SK-N-SH (cell line): ENCODE measurements at regions of chr11 and their contacts with region 1.

Region 1: DNA sequence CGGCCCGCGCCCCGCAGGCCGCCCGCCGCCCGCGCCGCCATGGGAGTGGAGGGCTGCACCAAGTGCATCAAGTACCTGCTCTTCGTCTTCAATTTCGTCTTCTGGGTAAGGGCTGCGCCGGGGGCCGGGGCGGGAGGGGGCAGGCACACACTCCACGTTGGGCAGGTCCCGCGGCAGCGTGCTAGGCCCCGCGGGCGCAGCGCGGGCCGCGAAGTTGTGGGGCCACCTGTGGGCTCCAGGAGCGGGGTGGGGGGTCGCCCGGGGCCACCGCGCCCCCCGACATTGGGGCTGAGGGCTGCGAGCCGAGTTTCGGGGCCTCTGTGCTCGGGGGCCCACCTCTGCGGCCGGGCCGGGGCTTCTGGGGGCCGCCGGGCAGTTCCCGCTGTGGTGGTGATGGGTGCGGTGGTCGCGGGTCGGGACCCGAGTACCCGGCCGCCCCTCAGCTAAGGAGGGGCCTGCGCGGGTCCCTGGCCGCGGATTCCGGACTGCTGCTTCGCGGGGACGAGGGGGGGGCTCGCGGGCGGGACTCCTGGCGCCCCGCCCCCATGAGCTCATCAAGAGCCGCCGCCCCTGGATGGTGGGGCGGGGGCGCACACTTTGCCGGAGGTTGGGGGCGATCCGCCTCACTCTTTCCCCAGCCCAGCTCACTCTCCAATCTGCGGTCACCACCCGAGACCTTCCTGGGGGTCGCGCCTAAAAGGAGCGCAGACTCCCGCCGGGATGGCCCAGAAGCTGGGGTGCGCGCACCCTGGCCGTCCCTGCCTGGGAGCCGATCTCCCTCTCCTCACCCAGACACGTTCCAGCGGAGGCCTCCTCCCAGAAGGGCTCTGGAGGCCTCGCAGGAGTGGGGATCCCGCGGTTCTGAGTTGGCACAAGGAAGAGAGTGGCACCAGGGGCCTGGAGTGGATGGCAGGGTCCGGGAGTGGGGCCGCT is 667 bp downstream of the CD81 start:
- DNase-seq: peak; percentile 95
- H3K4me3 ChIP-seq: peak overlapping the region; percentile 68 to 80
- H3K27ac ChIP-seq: peak overlapping the region; percentile 68 to 74
- H3K4me1 ChIP-seq: peaks cover 0 to 16% of the 10 kb centered on the region in 2 experiments; a peak in 2 of 4 replicates
- H3K27me3 ChIP-seq: no peaks in the 10 kb centered on the region
- CTCF ChIP-seq: no peak
- EP300 ChIP-seq: no peak
- RAD21 ChIP-seq: no peak

Region 2: DNA sequence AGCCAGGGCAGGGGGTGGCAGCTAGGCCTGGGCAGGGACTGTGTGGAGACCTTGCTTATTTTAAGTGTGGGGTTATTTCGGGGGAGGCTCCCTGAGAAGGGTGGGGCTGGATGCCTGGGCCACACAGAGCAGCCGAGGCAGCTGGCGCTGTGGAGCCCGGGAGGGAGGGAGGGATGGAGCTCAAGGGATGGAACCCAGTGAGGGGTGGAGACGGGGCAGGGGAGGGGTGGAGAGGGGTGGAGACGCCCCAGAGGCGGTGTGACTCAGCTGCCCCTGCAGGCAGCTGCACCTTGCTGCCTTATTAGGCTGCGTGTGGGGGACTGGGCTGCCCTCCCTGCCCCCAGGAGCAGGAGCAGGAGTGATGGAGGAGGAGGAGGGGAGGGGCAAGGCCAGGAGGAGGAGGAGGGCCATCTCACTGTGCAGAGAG is 13.0 kb after region 1 on chr11:
- CTCF ChIA-PET with region 1: interaction called, 8 read pairs
- POLR2A ChIA-PET with region 1: interaction called, 12 read pairs
- DNase-seq: no peak
- H3K4me3 ChIP-seq: no peak overlapping the region
- H3K27ac ChIP-seq: no peak overlapping the region
- H3K4me1 ChIP-seq: peaks cover 9 to 32% of the 10 kb centered on the region in 2 experiments; a peak in 2 of 4 replicates
- H3K27me3 ChIP-seq: no peaks in the 10 kb centered on the region
- CTCF ChIP-seq: no peak
- EP300 ChIP-seq: no peak
- RAD21 ChIP-seq: no peak

Region 3: GRCh38 chr11:2400069-2400760 is 22.4 kb after region 1 on chr11 and contains the start of gene TSSC4:
- CTCF ChIA-PET with region 1: interaction called, 8 read pairs
- POLR2A ChIA-PET with region 1: interaction called, 22 read pairs
- DNase-seq: peak; percentile 99
- H3K4me3 ChIP-seq: peak within 1 kb of the TSS; percentile 99 to 100
- H3K27ac ChIP-seq: peak within 1 kb of the TSS; percentile 93 to 95
- H3K4me1 ChIP-seq: peaks cover 10 to 23% of the 10 kb centered on the region in 2 experiments; a peak in 2 of 4 replicates
- H3K27me3 ChIP-seq: no peaks in the 10 kb centered on the region
- CTCF ChIP-seq: peak; percentile 96
- EP300 ChIP-seq: peak in 1 of 2 experiments; percentile 25; a peak in 1 of 4 replicates
- RAD21 ChIP-seq: peak; percentile 83
- polyA plus RNA-seq, gene TSSC4: 45.1 and 45.3 TPM in 2 replicates